Activated T-helper 2 cell treated with anti-CD3 and anti-CD28 coated beads, Interferon-gamma antibody, Interleukin-2, Interleukin-4, amounts not matched to agents 10 μg/mL and 5 μg/mL and 100 μg/mL, durations not matched to agents 14 hours and 24 hours and 36 hours (primary cell): ENCODE measurements at regions of chr20 and their contacts with region 1.

Region 1: DNA sequence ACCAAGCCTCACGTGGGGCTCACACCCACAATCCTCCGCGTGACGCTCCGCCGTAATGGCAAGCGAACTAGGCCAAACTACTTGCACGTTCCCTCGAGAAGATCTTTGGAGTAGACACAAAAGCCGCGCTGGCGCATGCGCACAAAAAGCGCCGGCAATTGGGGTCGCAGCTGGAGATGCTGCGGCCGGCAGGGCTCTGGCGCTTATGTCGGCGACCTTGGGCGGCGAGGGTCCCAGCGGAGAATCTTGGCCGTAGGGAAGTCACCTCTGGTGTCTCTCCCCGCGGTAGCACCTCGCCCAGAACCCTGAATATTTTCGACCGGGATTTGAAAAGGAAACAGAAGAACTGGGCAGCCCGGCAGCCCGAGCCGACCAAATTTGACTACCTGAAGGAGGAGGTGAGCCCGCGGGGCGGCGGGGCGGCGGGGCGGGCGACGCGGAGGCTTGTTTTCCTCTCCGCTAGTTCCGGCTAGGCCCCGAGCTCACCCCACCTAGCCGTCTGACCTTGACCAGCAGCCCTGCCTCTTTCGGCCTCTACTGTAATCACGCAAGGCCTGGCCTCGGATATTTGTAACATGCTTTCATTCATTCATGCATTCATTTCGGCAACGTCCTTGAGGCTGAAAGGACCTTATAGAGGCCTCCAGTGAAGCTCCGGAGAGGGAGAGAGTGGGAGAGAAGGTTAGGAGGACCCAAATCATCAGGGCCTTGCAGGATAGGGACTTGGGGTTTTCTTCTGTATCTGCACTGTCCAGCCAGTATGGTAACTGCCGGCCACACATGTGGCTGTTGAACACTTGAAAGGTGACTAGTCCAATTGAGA is at the starts of genes ESF1 and NDUFAF5:
- DNase-seq: peak; percentile 91
- H3K4me3 Mint-ChIP-seq: peak within 1 kb of the TSS; percentile 97
- H3K27ac Mint-ChIP-seq: peak within 1 kb of the TSS; percentile 93
- H3K4me1 Mint-ChIP-seq: peaks cover 29% of the 10 kb centered on the region
- H3K27me3 Mint-ChIP-seq: no peaks in the 10 kb centered on the region
- total RNA-seq, gene ESF1: 26.9 and 27.2 TPM in 2 replicates
- total RNA-seq, gene NDUFAF5: 33.3 and 36.1 TPM in 2 replicates

Region 2: DNA sequence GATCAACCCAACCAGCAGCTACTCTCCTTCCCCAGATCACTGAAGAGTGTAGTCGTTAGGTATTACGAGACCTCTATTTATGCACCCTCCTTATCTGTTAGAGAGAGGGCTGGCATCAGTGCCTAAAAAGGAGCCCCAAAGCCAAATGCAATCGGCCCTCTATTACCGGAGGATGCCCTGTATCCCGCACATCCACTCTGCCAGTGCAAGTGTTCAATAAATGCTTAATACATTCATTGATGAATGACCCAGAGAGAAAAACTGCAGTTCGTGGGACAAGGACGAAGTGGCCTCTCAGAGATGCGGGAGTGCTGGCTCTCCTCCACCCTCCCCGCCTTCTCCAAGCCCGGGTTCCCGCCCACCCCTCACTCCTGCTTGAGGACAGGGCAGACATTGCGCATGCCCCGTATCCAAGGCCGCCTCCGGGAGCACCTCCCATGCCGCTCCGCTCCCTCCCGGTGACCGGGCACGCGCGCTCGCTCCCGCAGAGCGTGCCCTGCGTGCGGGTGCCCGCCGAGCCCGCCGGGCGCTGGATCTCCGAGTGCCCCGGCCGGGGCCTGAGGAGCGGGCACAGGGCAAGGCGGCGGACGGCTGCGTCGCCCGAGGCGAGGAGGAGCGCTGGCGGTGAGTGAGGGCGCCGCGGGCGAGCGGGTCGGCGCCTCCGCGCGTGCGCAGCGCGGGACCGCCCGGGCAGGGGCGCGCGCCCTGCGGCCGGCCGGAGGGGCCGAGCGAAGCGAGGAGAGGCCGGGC is 1894.6 kb before region 1 on chr20:
- intact Hi-C with region 1: loop called (anchors 5 kb)
- DNase-seq: peak; percentile 58
- H3K4me3 Mint-ChIP-seq: peak overlapping the region; percentile 77
- H3K27ac Mint-ChIP-seq: no peak overlapping the region
- H3K4me1 Mint-ChIP-seq: peaks cover 17% of the 10 kb centered on the region
- H3K27me3 Mint-ChIP-seq: peaks cover 27% of the 10 kb centered on the region

Region 3: GRCh38 chr20:13221673-13222318 is 563.3 kb before region 1 on chr20:
- intact Hi-C with region 1: loop called (anchors 10 kb)
- DNase-seq: peak; percentile 69
- H3K4me3 Mint-ChIP-seq: peak overlapping the region; percentile 85
- H3K27ac Mint-ChIP-seq: peak overlapping the region; percentile 39
- H3K4me1 Mint-ChIP-seq: peaks cover 19% of the 10 kb centered on the region
- H3K27me3 Mint-ChIP-seq: peaks cover 52% of the 10 kb centered on the region

Region 4: GRCh38 chr20:13638496-13639222 is 146.4 kb before region 1 on chr20 and contains the start of gene TASP1:
- intact Hi-C with region 1: loop called (anchors 5 kb)
- DNase-seq: peak; percentile 90
- H3K4me3 Mint-ChIP-seq: peak within 1 kb of the TSS; percentile 95
- H3K27ac Mint-ChIP-seq: peak within 1 kb of the TSS; percentile 72
- H3K4me1 Mint-ChIP-seq: peaks cover 21% of the 10 kb centered on the region
- H3K27me3 Mint-ChIP-seq: peaks cover 3% of the 10 kb centered on the region
- total RNA-seq, gene TASP1: 9.6 and 11.3 TPM in 2 replicates

Region 5: DNA sequence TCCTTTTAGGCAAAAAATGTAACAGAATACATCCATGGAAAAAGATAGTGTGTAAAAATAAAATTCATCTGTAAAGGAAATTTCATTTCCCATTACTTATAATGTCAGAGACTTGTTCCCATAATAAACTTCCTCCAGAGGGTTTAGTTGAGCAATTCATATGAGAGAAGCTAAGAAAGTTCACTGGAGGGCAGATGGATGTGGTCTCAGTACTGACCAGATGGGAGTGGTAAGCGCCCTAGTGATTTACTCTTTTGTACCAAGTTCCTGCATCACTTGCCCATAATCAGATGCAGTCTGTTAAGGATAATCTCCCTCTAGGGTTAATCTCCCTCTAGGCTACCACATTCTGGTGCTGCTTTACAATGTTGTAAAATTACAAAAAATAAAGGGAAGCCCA is 62.1 kb before region 1 on chr20:
- intact Hi-C with region 1: no loop called
- DNase-seq: no peak
- H3K4me3 Mint-ChIP-seq: no peak overlapping the region
- H3K27ac Mint-ChIP-seq: no peak overlapping the region
- H3K4me1 Mint-ChIP-seq: peaks cover 3% of the 10 kb centered on the region
- H3K27me3 Mint-ChIP-seq: no peaks in the 10 kb centered on the region

Region 6: GRCh38 chr20:13865791-13866351 is 80.8 kb after region 1 on chr20:
- intact Hi-C with region 1: no loop called
- DNase-seq: no peak
- H3K4me3 Mint-ChIP-seq: no peak overlapping the region
- H3K27ac Mint-ChIP-seq: no peak overlapping the region
- H3K4me1 Mint-ChIP-seq: no peaks in the 10 kb centered on the region
- H3K27me3 Mint-ChIP-seq: no peaks in the 10 kb centered on the region